ENCODE measurements at regions of chr11 and their contacts with region 1.

Region 1: GRCh38 chr11:67507864-67508485 is at the start of gene CDK2AP2:
- DNase-seq: peak; percentile 98 to 100 (median 99)

Region 2: DNA sequence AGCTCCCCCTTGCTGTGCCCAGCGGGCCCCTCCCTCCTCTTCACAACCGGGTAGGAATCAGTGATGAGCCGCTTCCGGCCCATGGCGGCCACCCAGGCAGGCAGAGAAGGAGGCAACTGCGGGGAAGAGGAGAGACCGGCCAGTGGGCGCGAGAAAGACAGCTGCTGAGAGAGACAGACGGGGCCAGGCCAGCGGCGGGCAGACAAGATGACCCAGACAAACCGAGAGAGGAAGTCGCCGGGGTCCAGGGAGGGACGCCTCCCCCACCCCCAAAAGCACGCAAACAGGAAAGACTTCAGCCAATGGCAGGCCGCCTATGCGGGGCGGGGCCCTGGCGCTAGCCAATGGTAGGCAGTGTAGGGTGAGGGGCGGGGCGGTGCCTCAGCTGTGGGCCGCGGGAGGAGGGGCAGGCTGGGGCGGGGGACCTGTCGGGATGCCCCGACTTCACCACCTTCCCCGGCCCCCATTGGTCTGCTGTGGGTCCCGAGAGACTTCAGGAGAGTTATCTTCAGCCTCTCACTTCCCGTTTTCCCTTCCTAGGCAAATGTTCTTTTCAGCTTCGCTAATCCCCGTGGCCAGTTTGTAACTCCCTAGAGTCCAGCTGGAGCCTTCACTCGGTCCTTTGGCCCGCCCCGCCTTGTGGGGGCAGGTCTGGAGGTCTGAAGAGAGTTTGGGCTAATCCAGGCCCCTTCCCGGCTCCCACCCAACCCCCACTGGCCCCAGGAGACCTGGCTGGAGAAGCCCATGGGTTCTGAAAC is 154.5 kb before region 1 on chr11 and contains the start of gene POLD4:
- intact Hi-C with region 1: loop called (anchors 5 kb)
- DNase-seq: peak; percentile 96 to 100 (median 99)

Region 3: GRCh38 chr11:67364169-67364568 is 143.8 kb before region 1 on chr11:
- intact Hi-C with region 1: no loop called
- DNase-seq: no peak

Region 4: GRCh38 chr11:67401495-67402191 is 106.3 kb before region 1 on chr11 and contains the start of gene PPP1CA:
- intact Hi-C with region 1: loop called (anchors 5 kb)
- DNase-seq: peak; percentile 82 to 99 (median 90)

Region 5: GRCh38 chr11:67442504-67443405 is 65.2 kb before region 1 on chr11:
- intact Hi-C with region 1: loop called (anchors 10 kb)
- DNase-seq: peak in 2 of 10 donors; percentile 65 to 82

Region 6: DNA sequence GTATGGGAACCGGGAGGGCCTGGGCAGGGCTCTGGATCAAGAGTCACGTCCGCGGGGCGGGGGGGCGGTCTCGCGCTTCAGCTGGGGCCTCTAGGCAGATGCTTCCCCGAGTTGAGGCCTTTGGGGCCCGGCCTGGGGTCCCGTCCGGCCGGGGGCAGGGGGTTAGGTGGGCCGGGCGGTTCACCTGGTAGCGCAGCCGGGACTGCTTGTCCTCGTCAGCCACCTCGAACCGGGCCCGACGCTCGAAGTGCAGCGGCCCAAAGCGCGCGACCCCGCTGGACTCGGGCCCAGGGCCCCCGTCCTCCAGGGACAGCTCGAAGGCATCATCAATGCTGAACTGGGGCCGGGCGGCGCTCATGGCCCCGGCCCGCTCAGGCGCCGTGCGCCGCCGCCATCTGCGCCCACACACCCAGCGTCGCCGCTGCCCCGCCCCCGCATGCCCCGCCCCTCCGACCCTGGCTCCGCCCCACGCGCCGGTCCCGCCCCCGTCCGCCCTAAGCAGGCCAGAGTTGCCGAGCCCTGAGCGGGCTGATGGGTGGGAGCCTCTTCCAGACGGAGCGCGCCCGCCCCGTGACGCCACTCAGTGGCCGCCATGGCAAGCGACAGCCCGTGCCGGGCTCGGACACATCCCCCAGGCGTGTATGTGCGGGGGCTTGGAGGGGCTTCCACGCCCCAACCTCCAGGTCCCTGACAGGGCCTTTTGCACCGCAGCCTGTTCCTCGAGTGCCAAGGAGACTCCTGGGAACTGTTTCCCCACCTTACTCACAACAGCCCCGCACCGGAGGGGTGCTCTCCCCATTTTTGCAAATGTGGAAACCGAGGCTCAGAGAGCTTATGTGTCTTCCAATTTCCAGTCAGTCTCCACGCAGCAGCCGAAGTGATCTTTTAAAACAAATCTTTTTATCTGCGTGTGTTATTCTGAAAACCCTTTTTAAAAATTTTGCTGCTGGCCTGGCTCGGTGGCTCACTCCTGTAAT is 38.9 kb before region 1 on chr11 and contains the start of gene TMEM134:
- intact Hi-C with region 1: loop called (anchors 1 kb)
- DNase-seq: peak; percentile 89 to 99 (median 94)

Region 7: GRCh38 chr11:67482825-67483798 is 24.9 kb before region 1 on chr11 and contains the start of gene AIP:
- intact Hi-C with region 1: no loop called
- DNase-seq: peak; percentile 92 to 99 (median 96)

Region 8: GRCh38 chr11:67613960-67614715 is 106.2 kb after region 1 on chr11:
- intact Hi-C with region 1: no loop called
- DNase-seq: peak in 5 of 10 donors; percentile 36 to 92 (median 49)